OCI-LY7 (cell line): ENCODE measurements at regions of chr2 and their contacts with region 1.

Region 1: GRCh38 chr2:197145471-197146138 is 165.0 kb downstream of the ANKRD44 start:
- DNase-seq: peak; percentile 94
- H3K4me3 ChIP-seq: peak overlapping the region; percentile 37
- H3K27ac ChIP-seq: peak overlapping the region; percentile 100
- H3K4me1 ChIP-seq: peaks cover 93% of the 10 kb centered on the region
- CTCF ChIP-seq: no peak

Region 2: GRCh38 chr2:197159661-197160211 is 14.1 kb after region 1 on chr2:
- CTCF ChIA-PET with region 1: no interaction called
- POLR2A ChIA-PET with region 1: interaction called, 10 read pairs
- intact Hi-C with region 1: no loop called
- DNase-seq: no peak
- H3K4me3 ChIP-seq: no peak overlapping the region
- H3K27ac ChIP-seq: peak overlapping the region; percentile 67
- H3K4me1 ChIP-seq: peaks cover 62% of the 10 kb centered on the region
- CTCF ChIP-seq: no peak

Region 3: DNA sequence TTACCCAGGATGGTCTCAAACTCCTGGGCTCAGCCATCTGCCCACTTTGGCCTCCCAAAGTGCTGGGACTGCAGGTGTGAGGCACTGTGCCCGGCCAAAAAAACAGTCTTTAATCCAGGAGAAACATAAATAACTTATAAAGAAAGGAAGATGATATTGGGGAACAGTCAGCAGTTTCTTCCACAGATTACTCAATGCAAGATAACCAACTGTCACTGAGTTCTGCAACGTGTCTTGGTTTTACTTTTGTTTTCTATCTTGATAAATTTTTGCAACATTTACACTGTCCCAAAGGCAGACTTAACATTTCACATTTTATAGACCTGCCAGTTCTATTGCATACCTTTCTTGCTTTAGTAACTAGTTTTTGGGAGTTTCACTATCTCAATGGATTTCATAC is 93.8 kb after region 1 on chr2:
- CTCF ChIA-PET with region 1: no interaction called
- POLR2A ChIA-PET with region 1: no interaction called
- intact Hi-C with region 1: no loop called
- DNase-seq: no peak
- H3K4me3 ChIP-seq: peak overlapping the region; percentile 47
- H3K27ac ChIP-seq: no peak overlapping the region
- H3K4me1 ChIP-seq: peaks cover 57% of the 10 kb centered on the region
- CTCF ChIP-seq: no peak